ENCODE measurements at regions of chrX and their contacts with region 1.

Region 1: GRCh38 chrX:24054182-24055042 is at the start of gene EIF2S3:
- DNase-seq: peak; percentile 87 to 88
- H3K4me3 ChIP-seq: no peak within 1 kb of the TSS; the same call in 1 of the 2 replicates
- H3K27ac ChIP-seq: no peak within 1 kb of the TSS; the same call in 1 of the 2 replicates
- H3K4me1 ChIP-seq: peaks cover 10% of the 10 kb centered on the region; the same call in 1 of the 2 replicates
- H3K27me3 ChIP-seq: no peaks in the 10 kb centered on the region
- CTCF ChIP-seq: peak; percentile 66
- total RNA-seq, gene EIF2S3: 216 and 252 TPM in 2 replicates

Region 2: DNA sequence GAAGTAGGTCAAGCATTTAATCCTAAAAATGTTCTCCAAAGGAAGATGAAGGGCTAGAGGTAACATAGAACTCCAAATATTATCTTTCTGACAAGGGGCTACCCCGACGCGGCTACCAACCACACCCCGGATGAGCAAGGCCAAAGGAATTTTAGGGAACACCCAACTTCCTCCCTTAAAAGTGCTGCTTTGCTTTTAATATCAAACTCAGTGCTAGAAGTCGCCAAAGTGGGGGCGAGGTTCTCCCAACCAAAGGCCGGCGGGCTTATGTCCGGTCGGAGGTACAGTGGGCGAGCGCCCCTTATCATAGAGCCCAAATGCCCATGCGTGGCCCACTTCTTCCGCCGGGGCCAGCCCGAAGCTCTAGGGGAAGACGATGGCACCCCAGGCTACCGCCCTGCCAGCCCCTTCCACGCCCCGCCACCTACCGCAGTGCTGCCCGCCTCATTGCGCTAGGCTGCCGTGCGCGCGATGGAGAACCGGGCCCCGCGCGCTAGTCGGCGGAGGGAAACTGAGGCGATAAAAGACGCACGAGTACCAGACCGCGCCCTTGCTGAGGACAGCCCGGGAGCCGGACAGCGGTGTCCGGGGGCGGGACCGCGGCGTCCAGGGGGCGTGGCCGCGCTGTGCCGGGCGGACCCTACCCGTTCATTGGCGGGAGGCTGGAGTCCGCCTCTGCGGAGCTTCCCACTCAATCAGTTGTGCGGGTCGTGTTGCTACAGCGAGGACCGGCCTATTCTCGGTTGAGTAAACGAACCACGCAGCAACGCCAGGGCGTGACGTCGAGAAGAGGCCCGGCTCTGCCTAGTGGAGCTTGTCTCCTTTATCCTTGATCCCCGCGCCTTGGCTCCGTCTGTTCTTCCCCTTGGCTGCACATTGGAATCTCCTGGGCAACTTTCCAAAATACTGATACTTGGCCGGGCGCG is 311.5 kb before region 1 on chrX and contains the start of gene ACOT9:
- CTCF ChIA-PET with region 1: no interaction called
- POLR2A ChIA-PET with region 1: interaction called, 5 read pairs
- intact Hi-C with region 1: loop called (anchors 1 kb)
- DNase-seq: peak; percentile 93
- H3K4me3 ChIP-seq: peak within 1 kb of the TSS; percentile 84
- H3K27ac ChIP-seq: peak within 1 kb of the TSS; percentile 97
- H3K4me1 ChIP-seq: peaks cover 10% of the 10 kb centered on the region; the same call in 1 of the 2 replicates
- H3K27me3 ChIP-seq: no peaks in the 10 kb centered on the region
- CTCF ChIP-seq: no peak
- total RNA-seq, gene ACOT9: 40.6 and 47.0 TPM in 2 replicates

Region 3: DNA sequence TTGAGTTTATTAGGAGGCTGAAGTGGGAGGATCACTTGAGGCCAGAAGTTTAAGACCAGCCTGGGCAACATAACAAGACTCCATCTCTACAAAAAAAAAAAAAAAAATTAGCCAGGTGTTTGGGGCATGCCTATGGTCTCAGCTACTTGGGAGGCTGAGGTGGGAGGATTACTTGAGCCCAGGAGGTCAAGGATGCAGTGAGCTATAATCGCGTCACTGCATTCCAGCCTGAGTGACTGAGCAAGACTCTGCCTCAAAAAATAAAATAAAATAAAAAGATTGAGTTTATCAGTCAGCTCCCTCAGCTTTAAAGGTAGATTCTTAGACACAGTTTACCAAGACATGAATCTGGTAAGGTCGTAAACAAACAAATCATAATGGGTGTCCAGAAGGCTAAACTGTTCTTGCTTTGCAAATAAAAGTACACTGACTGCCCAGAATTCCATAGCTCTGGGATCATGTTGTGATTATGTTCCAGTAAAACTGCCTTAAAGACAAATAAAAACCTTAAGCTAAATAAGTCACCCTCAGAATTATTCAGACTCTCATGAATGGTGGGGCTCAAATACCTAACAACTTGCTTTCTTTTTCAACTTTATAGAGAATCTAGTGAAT is 165.4 kb before region 1 on chrX:
- CTCF ChIA-PET with region 1: no interaction called
- POLR2A ChIA-PET with region 1: interaction called, 28 read pairs
- intact Hi-C with region 1: no loop called
- DNase-seq: no peak
- H3K4me3 ChIP-seq: no peak overlapping the region
- H3K27ac ChIP-seq: 0 out of 2 replicates have a peak overlapping the region, but pooled peaks have one; percentile 27
- H3K4me1 ChIP-seq: peaks cover 8% of the 10 kb centered on the region
- H3K27me3 ChIP-seq: no peaks in the 10 kb centered on the region
- CTCF ChIP-seq: no peak

Region 4: DNA sequence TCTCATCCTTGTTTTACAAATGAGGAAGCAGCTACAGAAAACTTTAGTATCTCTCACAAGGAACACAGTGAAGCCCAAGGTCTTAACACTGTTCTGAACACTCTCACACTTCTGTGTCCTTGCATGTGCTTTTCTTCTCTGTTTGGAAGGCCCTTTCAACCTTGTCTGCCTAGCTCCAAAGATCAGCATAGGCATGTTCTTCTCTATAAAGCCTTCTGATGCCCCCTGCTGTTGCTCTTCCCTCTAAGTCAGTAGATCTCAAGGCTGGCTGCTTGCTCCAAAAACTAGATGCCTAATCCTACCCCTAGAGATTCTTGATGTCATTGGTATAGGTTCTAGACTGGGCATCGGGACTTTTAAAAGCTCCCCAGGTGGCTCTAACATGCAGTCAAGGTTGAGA is 152.6 kb before region 1 on chrX:
- CTCF ChIA-PET with region 1: interaction called, 10 read pairs
- POLR2A ChIA-PET with region 1: interaction called, 4 read pairs
- intact Hi-C with region 1: no loop called
- DNase-seq: peak; percentile 22 to 60
- H3K4me3 ChIP-seq: no peak overlapping the region
- H3K27ac ChIP-seq: peak overlapping the region; percentile 91
- H3K4me1 ChIP-seq: peaks cover 52% of the 10 kb centered on the region
- H3K27me3 ChIP-seq: no peaks in the 10 kb centered on the region
- CTCF ChIP-seq: peak; percentile 50

Region 5: DNA sequence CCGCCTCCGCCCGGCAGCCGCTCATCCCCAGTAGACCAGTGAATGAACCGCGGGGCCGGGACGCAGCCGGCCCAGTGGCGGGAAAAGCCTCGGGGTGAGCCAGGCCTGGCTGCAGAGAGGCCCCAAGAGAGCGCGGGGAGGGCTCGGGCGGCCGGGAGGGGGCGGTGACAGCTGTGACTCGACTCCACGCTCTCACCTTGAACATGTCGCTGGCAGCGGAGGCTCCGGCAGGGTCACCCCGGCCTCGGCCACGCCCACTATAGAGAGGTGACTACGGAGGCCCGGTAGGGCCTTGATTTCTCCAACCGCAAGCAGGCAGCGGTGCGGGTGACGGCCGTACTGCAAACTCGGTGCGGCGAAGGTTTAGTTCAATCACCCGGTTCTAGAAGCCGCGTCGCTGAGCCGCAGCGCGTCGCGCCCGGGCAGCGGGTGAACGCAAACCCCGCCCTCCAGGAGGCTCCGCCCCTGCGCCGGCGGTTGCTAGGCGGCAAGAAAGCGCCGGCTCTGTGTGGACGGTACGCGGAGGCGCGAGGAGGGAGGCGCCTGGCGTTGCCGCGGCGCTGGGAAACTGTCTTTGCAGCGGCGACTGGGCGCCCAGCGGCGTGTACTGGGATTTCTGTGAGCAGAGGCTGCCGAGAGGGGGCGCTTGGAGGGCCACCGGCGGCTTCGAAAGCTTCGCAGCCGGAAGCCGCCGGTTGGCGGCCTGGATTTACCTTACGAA is 146.8 kb before region 1 on chrX and contains the starts of genes APOO and CXorf58:
- CTCF ChIA-PET with region 1: interaction called, 10 read pairs
- POLR2A ChIA-PET with region 1: interaction called, 4 read pairs
- intact Hi-C with region 1: loop called (anchors 1 kb)
- DNase-seq: peak; percentile 82 to 93
- H3K4me3 ChIP-seq: peak within 1 kb of the TSS; percentile 79
- H3K27ac ChIP-seq: peak within 1 kb of the TSS; percentile 69
- H3K4me1 ChIP-seq: peaks cover 12% of the 10 kb centered on the region
- H3K27me3 ChIP-seq: no peaks in the 10 kb centered on the region
- CTCF ChIP-seq: peak; percentile 61
- total RNA-seq, gene APOO: 25.5 and 42.3 TPM in 2 replicates
- total RNA-seq, gene CXorf58: 0.20 TPM in 1 of 2 replicates, not detected in the other

Region 6: DNA sequence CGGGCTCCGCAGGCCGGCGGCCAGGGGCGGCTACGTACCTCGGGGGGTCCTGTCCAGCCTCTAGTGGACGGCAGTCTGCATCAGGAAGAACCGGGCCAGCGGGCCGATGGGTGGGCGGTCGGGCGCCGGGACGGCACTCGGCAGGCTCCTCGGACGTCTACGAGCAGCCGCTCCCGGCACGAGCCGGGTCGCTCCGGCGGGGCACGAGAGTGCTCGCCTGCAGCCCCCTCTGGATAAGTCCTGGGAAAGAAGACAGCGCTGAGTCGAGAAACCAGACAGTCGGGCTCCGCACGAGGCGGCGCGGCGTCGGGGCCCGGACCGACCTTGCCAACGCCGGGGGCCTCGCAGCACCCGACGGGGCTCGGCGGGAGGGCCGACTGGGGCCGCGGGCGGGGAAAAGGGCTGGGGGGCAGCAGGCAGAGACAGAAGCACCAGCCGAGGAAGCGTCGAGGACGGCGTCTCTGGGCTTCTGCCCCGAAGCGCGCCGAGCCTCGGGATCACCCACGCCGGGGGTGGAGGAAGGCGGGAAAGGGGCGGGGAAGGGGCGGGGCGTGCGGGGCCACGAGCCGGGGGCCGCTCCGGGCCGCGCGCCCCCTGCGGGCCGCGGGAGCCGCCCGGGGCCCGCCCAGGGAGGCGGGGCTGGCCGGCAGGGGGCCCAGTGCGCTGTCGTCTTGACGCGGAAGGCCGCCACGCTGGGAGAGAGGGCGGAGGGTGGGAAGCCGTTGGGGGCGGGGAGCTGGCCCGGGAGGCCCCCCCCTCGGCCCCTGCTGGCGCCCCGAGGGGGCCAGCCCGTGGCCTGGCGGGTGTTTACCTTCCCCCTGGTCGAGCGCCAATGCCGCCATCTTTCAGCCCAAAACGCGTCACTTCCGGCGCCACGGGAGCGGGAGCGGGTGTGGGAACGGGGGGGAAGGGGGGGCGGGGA is 29.3 kb before region 1 on chrX:
- CTCF ChIA-PET with region 1: interaction called, 20 read pairs
- POLR2A ChIA-PET with region 1: interaction called, 10 read pairs
- intact Hi-C with region 1: loop called (anchors 1 kb)
- DNase-seq: peak; percentile 68 to 92
- H3K4me3 ChIP-seq: peak overlapping the region; percentile 97
- H3K27ac ChIP-seq: peak overlapping the region; percentile 96
- H3K4me1 ChIP-seq: peaks cover 10% of the 10 kb centered on the region; the same call in 1 of the 2 replicates
- H3K27me3 ChIP-seq: no peaks in the 10 kb centered on the region
- CTCF ChIP-seq: no peak

Region 7: GRCh38 chrX:24150051-24150790 is 95.8 kb after region 1 on chrX:
- CTCF ChIA-PET with region 1: no interaction called
- POLR2A ChIA-PET with region 1: no interaction called
- intact Hi-C with region 1: loop called (anchors 1 kb)
- DNase-seq: peak; percentile 61 to 77
- H3K4me3 ChIP-seq: peak overlapping the region; percentile 90
- H3K27ac ChIP-seq: peak overlapping the region; percentile 86
- H3K4me1 ChIP-seq: peaks cover 72% of the 10 kb centered on the region
- H3K27me3 ChIP-seq: no peaks in the 10 kb centered on the region
- CTCF ChIP-seq: peak; percentile 24; the same call in 1 of the 2 replicates

Measured in PC-9 (cell line).